K562 (cell line): ENCODE measurements at regions of chr10 and their contacts with region 1.

Region 1: GRCh38 chr10:12042797-12043651 is at the start of gene UPF2:
- DNase-seq: peak; percentile 99
- ATAC-seq: peak; percentile 90
- H3K4me3 ChIP-seq: peak within 1 kb of the TSS; percentile 100
- H3K27ac ChIP-seq: peak within 1 kb of the TSS; percentile 100
- H3K4me1 ChIP-seq: peaks cover 5 to 11% of the 10 kb centered on the region in 2 experiments; a peak in 4 of 5 replicates
- H3K27me3 ChIP-seq: no peaks in the 10 kb centered on the region
- CTCF ChIP-seq: no peak
- EP300 ChIP-seq: peak; percentile 20; the same call in 1 of the 2 replicates
- POLR2A ChIP-seq: peak; percentile 52; the same call in 1 of the 2 replicates
- RAD21 ChIP-seq: no peak; a peak in 1 of 4 replicates
- polyA plus RNA-seq, gene UPF2: 13.9 to 17.3 TPM

Region 2: DNA sequence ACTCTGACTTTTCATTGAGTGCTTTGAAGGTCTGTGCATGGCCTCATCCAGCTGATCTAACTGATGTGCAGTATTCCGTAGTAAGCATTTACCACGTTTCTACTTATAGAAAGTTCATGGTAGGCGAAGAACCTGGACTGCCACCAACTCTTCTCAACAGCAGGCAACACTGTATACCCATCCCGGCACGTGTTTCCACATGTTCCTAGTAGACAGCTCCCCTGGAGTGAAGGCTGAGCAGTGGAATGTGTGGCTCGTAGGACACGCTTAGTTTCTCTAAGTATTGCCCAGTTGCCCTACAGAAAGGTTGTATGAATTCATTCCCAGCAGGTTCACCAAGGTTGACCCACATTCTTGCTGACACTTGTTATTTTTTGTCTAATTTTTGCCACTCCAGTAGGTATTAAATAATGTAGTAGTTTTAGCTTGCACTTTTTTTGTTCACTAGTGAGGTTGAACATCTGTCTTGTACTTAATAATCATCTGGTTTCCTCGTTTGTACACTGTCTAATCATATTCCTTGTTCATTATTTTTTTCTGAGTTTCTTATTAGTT is 204.6 kb before region 1 on chr10:
- CTCF ChIA-PET with region 1: no interaction called
- POLR2A ChIA-PET with region 1: no interaction called
- in situ Hi-C with region 1: no loop called
- intact Hi-C with region 1: no loop called
- DNase-seq: no peak
- ATAC-seq: peak; percentile 29; the same call in 2 of the 3 replicates
- H3K4me3 ChIP-seq: no peak overlapping the region
- H3K27ac ChIP-seq: no peak overlapping the region
- H3K4me1 ChIP-seq: no peaks in the 10 kb centered on the region
- H3K27me3 ChIP-seq: no peaks in the 10 kb centered on the region
- CTCF ChIP-seq: no peak
- EP300 ChIP-seq: no peak
- POLR2A ChIP-seq: no peak
- RAD21 ChIP-seq: no peak

Region 3: DNA sequence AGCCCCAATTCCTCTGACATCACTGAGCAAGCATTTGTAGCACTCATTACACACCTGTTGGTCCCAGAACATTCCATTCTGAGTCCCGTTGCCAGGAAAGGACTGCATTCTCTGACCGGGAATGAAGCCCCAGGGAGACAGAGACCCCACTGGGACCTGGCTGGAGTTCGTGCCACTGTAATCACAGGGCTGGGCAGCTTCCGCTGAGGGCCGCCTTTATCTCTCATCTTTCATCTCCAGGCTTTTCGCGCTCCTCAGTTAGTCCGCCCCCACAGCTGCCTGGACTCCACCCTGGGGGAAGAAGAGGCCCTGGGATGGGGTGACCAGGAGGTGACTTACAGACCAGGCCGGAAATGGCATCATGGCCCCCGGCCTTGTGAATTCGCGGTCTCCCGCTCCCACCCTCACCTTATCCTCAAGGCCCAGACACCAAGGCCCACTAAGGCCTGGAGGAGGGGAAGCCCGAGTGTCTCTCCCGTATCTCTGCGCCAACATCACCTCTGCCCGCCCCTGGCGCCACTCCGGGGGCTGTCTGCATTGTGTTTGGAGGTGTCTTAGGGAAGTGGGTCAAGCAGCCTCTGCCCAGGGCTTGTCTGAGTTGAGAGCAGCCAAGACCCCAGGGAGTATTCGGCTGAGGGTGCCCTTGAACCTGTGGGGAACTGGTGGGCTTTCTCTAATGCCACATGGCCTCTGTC is 144.5 kb before region 1 on chr10:
- CTCF ChIA-PET with region 1: no interaction called
- POLR2A ChIA-PET with region 1: interaction called, 4 read pairs
- in situ Hi-C with region 1: no loop called
- intact Hi-C with region 1: loop called (anchors 10 kb)
- DNase-seq: peak; percentile 94 to 98 (median 96)
- ATAC-seq: peak; percentile 82
- H3K4me3 ChIP-seq: peak overlapping the region; percentile 47
- H3K27ac ChIP-seq: peak overlapping the region; percentile 98
- H3K4me1 ChIP-seq: peaks cover 33 to 60% of the 10 kb centered on the region in 2 experiments
- H3K27me3 ChIP-seq: no peaks in the 10 kb centered on the region
- CTCF ChIP-seq: no peak
- EP300 ChIP-seq: peak; percentile 87
- POLR2A ChIP-seq: peak; percentile 96
- RAD21 ChIP-seq: no peak

Region 4: DNA sequence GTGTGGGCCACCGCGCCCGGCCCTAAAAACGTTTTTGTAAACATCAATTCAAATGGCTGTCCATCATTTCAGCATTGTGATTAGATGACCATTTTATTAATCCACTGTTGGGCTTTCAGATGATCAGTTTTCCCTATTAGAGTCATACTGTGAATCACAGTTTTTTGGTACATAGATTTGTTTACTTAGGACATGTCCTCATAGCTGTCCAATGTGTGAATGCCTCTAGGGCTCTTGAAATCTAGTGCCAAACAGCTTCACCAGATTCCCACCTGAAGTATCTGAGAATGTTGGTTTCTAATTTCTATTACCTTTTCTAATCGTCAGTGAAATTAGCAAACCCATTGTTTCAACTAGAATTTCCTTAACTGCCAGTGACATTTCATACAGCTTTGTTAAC is 67.2 kb before region 1 on chr10:
- CTCF ChIA-PET with region 1: no interaction called
- POLR2A ChIA-PET with region 1: no interaction called
- in situ Hi-C with region 1: no loop called
- intact Hi-C with region 1: no loop called
- DNase-seq: no peak
- ATAC-seq: no peak
- H3K4me3 ChIP-seq: no peak overlapping the region
- H3K27ac ChIP-seq: no peak overlapping the region
- H3K4me1 ChIP-seq: no peaks in the 10 kb centered on the region
- H3K27me3 ChIP-seq: no peaks in the 10 kb centered on the region
- CTCF ChIP-seq: no peak
- EP300 ChIP-seq: no peak
- POLR2A ChIP-seq: no peak
- RAD21 ChIP-seq: no peak

Region 5: GRCh38 chr10:12027539-12027938 is 15.5 kb before region 1 on chr10:
- CTCF ChIA-PET with region 1: no interaction called
- POLR2A ChIA-PET with region 1: interaction called, 20 read pairs
- in situ Hi-C with region 1: no loop called
- intact Hi-C with region 1: no loop called
- DNase-seq: no peak
- ATAC-seq: 0 out of 3 replicates have a peak, but pooled peaks have one; percentile 30
- H3K4me3 ChIP-seq: no peak overlapping the region
- H3K27ac ChIP-seq: no peak overlapping the region
- H3K4me1 ChIP-seq: no peaks in the 10 kb centered on the region; a peak in 1 of 5 replicates
- H3K27me3 ChIP-seq: no peaks in the 10 kb centered on the region
- CTCF ChIP-seq: no peak
- EP300 ChIP-seq: no peak
- POLR2A ChIP-seq: no peak
- RAD21 ChIP-seq: no peak

Region 6: GRCh38 chr10:12068449-12069269 is 25.6 kb after region 1 on chr10 and contains the start of gene DHTKD1:
- CTCF ChIA-PET with region 1: no interaction called
- POLR2A ChIA-PET with region 1: no interaction called
- in situ Hi-C with region 1: no loop called
- intact Hi-C with region 1: loop called (anchors 2 kb)
- DNase-seq: peak; percentile 99
- ATAC-seq: peak; percentile 99
- H3K4me3 ChIP-seq: peak within 1 kb of the TSS; percentile 99
- H3K27ac ChIP-seq: peak within 1 kb of the TSS; percentile 73
- H3K4me1 ChIP-seq: peaks cover 13 to 27% of the 10 kb centered on the region in 2 experiments; a peak in 4 of 5 replicates
- H3K27me3 ChIP-seq: no peaks in the 10 kb centered on the region
- CTCF ChIP-seq: peak; percentile 34 to 44 (median 34); a peak in 4 of 6 replicates
- EP300 ChIP-seq: peak; percentile 35; the same call in 1 of the 2 replicates
- POLR2A ChIP-seq: peak; percentile 84
- RAD21 ChIP-seq: peak in 1 of 2 experiments; percentile 16; a peak in 1 of 4 replicates
- polyA plus RNA-seq, gene DHTKD1: 3.1 to 3.3 TPM

Region 7: DNA sequence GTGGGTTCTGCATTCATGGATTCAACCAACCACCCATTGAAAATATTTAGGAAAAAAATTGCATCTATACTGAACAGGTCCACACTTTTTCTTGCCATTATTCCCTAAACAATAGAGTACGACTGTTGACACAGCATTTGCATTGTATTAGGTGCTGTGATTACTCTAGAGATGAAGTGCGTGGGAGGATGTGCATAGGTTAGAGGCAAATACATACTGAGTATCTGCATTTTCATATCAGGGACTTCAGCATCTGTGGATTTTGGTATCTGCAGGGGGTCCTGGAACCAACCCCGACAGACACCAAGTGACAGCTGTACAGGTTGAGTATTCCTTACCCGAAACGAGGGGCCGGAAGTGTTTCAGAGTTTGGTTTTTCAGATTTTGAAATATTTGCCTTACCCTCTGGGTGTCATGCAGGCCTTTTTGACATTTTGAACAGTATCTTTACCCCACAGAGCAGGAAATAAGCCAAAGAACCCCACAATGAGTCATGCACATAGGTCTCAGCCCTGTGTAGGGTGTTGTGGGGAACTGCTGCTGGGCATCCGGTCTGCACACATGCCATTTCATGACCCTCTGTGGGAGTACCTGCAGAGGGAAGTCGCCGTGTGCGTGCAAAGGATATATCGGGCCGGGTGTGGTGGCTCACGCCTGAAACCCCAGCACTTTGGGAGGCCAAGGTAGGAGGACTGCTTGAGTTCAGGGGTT is 138.2 kb after region 1 on chr10:
- CTCF ChIA-PET with region 1: no interaction called
- POLR2A ChIA-PET with region 1: no interaction called
- in situ Hi-C with region 1: no loop called
- intact Hi-C with region 1: no loop called
- DNase-seq: no peak
- ATAC-seq: no peak
- H3K4me3 ChIP-seq: no peak overlapping the region
- H3K27ac ChIP-seq: no peak overlapping the region
- H3K4me1 ChIP-seq: no peaks in the 10 kb centered on the region
- H3K27me3 ChIP-seq: no peaks in the 10 kb centered on the region
- CTCF ChIP-seq: no peak
- EP300 ChIP-seq: no peak
- POLR2A ChIP-seq: 0 out of 2 replicates have a peak, but pooled peaks have one; percentile 17
- RAD21 ChIP-seq: no peak

Region 8: DNA sequence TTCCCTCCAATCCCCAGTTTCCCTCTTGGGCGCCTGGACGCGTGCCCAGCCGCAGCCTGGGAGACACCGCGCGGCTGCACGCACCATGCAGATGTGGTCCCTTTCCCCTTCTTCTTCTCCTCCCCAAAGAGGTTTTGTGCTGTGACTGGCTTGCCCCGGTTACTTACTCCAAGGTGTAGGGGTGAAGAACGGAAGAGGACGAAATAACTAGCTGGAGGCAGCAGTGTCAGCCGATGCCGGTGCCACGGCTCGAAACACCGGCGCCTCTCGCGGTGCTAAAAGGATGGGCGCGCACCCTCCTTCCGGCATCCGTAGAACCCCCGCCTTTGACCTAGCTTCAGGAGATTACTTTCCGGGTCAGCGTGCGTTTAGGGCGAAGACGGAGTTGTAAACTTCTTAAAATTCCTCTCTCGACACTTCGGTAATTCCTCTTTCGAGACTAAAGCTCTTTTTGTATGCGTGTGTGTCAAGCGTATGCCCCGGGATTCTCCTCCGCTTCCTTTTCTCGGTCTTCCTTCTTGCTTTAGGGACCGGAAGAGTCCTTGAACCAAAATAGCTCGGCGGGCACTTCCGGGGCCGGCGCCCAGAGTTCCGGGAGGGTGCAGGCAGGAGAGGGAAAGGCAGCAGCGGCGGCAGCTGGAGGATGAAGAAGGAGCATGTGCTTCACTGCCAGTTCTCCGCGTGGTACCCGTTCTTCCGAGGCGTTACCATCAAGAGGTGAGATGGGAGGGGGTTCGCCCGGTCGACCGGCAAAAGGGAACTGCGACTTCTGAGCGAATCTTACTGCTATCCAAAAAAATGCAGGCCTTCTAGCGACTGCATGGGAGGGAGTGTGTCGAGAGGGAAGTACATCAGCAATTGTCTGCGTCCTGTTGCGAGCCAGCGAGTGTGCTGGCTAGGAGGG is 152.8 kb after region 1 on chr10 and contains the starts of genes CDC123 and NUDT5:
- CTCF ChIA-PET with region 1: no interaction called
- POLR2A ChIA-PET with region 1: no interaction called
- in situ Hi-C with region 1: no loop called
- intact Hi-C with region 1: loop called (anchors 10 kb)
- DNase-seq: peak; percentile 79 to 91 (median 84)
- ATAC-seq: peak; percentile 94
- H3K4me3 ChIP-seq: peak within 1 kb of the TSS; percentile 95
- H3K27ac ChIP-seq: peak within 1 kb of the TSS; percentile 95
- H3K4me1 ChIP-seq: peaks cover 8% of the 10 kb centered on the region in 2 experiments; a peak in 3 of 5 replicates
- H3K27me3 ChIP-seq: no peaks in the 10 kb centered on the region
- CTCF ChIP-seq: peak in 1 of 3 experiments; percentile 11; a peak in 1 of 6 replicates
- EP300 ChIP-seq: peak; percentile 41
- POLR2A ChIP-seq: peak; percentile 90
- RAD21 ChIP-seq: peak in 1 of 2 experiments; percentile 14; a peak in 1 of 4 replicates
- polyA plus RNA-seq, gene CDC123: 153 to 223 TPM
- polyA plus RNA-seq, gene NUDT5: 400 to 422 TPM